CD14-positive monocyte (primary cell): ENCODE measurements at regions of chr2 and their contacts with region 1.

Region 1: GRCh38 chr2:219498280-219499057 is at the start of gene GMPPA:
- DNase-seq: peak; percentile 93 to 95 (median 94)
- H3K4me3 ChIP-seq: peak within 1 kb of the TSS; percentile 58 to 93 (median 80)
- H3K4me3 Mint-ChIP-seq: peak within 1 kb of the TSS; percentile 98 to 100
- H3K27ac ChIP-seq: peak within 1 kb of the TSS; percentile 89 to 90
- H3K27ac Mint-ChIP-seq: peak within 1 kb of the TSS; percentile 94 to 99 (median 97)
- H3K4me1 ChIP-seq: peaks cover 28 to 43% of the 10 kb centered on the region in 2 donors
- H3K4me1 Mint-ChIP-seq: peaks cover 38% of the 10 kb centered on the region
- H3K27me3 ChIP-seq: peaks cover 31 to 42% of the 10 kb centered on the region in 2 donors
- H3K27me3 Mint-ChIP-seq: peaks cover 42 to 46% (median 43%) of the 10 kb centered on the region in 3 donors
- CTCF ChIP-seq: no peak
- polyA plus RNA-seq, gene GMPPA: 35.5 to 71.2 (median 35.9) TPM

Region 2: DNA sequence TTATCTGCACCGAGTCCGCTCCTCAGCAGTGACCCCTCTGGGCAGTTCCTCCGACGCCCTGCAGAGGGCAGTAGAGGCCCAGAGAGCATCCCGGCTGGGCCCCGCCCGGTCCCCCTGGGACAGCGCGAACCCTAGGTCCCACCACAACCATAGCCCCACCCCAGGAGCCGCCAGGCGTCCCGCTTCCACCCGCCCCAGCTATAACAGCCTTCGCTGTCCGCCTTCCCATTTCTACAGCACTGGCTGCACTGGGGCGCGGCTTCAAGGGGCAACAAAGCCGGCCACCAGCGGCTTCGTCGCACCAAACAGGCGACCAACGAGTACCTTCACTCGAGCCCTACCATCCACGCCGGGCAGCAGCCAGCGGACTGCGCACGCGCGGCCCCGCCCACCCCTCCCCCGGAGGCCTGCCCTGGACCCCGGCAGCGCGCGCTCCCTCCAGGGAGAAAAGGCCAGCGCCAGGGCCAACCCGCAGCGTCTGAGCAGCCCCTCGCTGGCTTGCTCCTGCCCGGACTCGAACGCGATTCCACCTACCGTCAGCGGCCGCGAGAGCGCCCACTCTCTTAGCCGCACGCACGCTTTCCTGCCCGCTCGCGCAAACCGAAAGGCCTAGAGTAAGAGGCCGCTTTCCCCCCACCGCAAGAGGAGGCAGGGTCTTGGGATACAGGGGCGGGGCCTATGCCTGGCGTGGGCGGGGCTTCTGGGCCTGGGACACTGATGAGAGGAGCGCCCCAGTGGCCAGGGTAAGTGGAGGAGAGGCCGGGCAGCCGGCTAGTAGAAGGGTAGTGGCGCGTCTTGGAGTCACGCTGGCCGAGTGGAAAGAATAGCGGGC is 338.1 kb before region 1 on chr2 and contains the start of gene NHEJ1:
- intact Hi-C with region 1: loop called in 1 of 2 experiments (anchors 10 kb)
- DNase-seq: peak; percentile 85 to 92 (median 89)
- H3K4me3 ChIP-seq: peak within 1 kb of the TSS; percentile 60 to 87 (median 80)
- H3K4me3 Mint-ChIP-seq: peak within 1 kb of the TSS; percentile 93
- H3K27ac ChIP-seq: peak within 1 kb of the TSS; percentile 71 to 81
- H3K27ac Mint-ChIP-seq: peak within 1 kb of the TSS; percentile 87 to 97 (median 95)
- H3K4me1 ChIP-seq: peaks cover 15 to 18% of the 10 kb centered on the region in 2 donors
- H3K4me1 Mint-ChIP-seq: peaks cover 17% of the 10 kb centered on the region
- H3K27me3 ChIP-seq: no peaks in the 10 kb centered on the region
- H3K27me3 Mint-ChIP-seq: peaks cover 0 to 5% (median 2%) of the 10 kb centered on the region in 3 donors
- CTCF ChIP-seq: peak; percentile 99
- polyA plus RNA-seq, gene NHEJ1: 12.6 to 20.9 (median 20.3) TPM

Region 3: GRCh38 chr2:219543601-219544358 is 45.3 kb after region 1 on chr2 and contains the starts of genes CHPF and TMEM198:
- intact Hi-C with region 1: loop called in 1 of 2 experiments (anchors 5 kb)
- DNase-seq: peak; percentile 87 to 94 (median 90)
- H3K4me3 ChIP-seq: peak within 1 kb of the TSS; percentile 32 to 76 (median 56)
- H3K4me3 Mint-ChIP-seq: peak within 1 kb of the TSS; percentile 78 to 87
- H3K27ac ChIP-seq: no peak within 1 kb of the TSS
- H3K27ac Mint-ChIP-seq: peak within 1 kb of the TSS in 3 of 7 donors; percentile 36 to 73 (median 53)
- H3K4me1 ChIP-seq: peaks cover 21 to 27% of the 10 kb centered on the region in 2 donors
- H3K4me1 Mint-ChIP-seq: peaks cover 9% of the 10 kb centered on the region
- H3K27me3 ChIP-seq: peaks cover 24 to 51% of the 10 kb centered on the region in 2 donors
- H3K27me3 Mint-ChIP-seq: peaks cover 38 to 63% (median 40%) of the 10 kb centered on the region in 3 donors
- CTCF ChIP-seq: no peak
- polyA plus RNA-seq, gene CHPF: 0.09 to 0.32 (median 0.09) TPM
- polyA plus RNA-seq, gene TMEM198: not detected

Region 4: GRCh38 chr2:219597552-219598307 is 99.3 kb after region 1 on chr2 and contains the start of gene STK11IP:
- intact Hi-C with region 1: loop called (anchors 5 kb)
- DNase-seq: peak; percentile 96 to 97 (median 97)
- H3K4me3 ChIP-seq: peak within 1 kb of the TSS; percentile 65 to 81 (median 80)
- H3K4me3 Mint-ChIP-seq: peak within 1 kb of the TSS; percentile 95 to 96
- H3K27ac ChIP-seq: peak within 1 kb of the TSS; percentile 69 to 91
- H3K27ac Mint-ChIP-seq: peak within 1 kb of the TSS; percentile 94 to 99 (median 97)
- H3K4me1 ChIP-seq: peaks cover 11 to 16% of the 10 kb centered on the region in 2 donors
- H3K4me1 Mint-ChIP-seq: peaks cover 22% of the 10 kb centered on the region
- H3K27me3 ChIP-seq: no peaks in the 10 kb centered on the region
- H3K27me3 Mint-ChIP-seq: peaks cover 3 to 7% (median 4%) of the 10 kb centered on the region in 3 donors
- CTCF ChIP-seq: no peak
- polyA plus RNA-seq, gene STK11IP: 13.0 to 79.1 (median 15.7) TPM

Region 5: DNA sequence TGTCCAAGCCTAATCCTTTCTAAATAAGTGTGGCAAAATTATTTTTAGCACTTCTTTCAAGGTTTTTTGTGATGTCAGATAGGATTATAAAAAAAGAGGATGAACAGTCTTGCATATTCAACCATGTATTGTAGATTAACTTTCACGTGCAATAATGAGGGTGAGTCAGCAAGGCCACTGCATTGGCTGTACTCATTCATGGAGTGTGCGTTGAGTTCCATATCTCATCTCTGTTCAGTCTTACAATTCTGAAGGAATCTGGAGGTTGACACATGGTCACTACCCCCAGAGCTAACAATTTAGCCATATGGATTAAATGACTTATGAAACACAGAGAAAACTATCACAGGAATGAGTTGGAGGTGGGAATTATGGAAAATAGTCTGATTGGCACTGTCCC is 939.5 kb after region 1 on chr2:
- intact Hi-C with region 1: no loop called
- DNase-seq: no peak
- H3K4me3 ChIP-seq: no peak overlapping the region
- H3K4me3 Mint-ChIP-seq: no peak overlapping the region
- H3K27ac ChIP-seq: no peak overlapping the region
- H3K27ac Mint-ChIP-seq: no peak overlapping the region
- H3K4me1 ChIP-seq: no peaks in the 10 kb centered on the region
- H3K4me1 Mint-ChIP-seq: no peaks in the 10 kb centered on the region
- H3K27me3 ChIP-seq: no peaks in the 10 kb centered on the region
- H3K27me3 Mint-ChIP-seq: no peaks in the 10 kb centered on the region
- CTCF ChIP-seq: no peak

Region 6: GRCh38 chr2:220469201-220469600 is 970.7 kb after region 1 on chr2:
- intact Hi-C with region 1: no loop called
- DNase-seq: no peak
- H3K4me3 ChIP-seq: no peak overlapping the region
- H3K4me3 Mint-ChIP-seq: no peak overlapping the region
- H3K27ac ChIP-seq: no peak overlapping the region
- H3K27ac Mint-ChIP-seq: no peak overlapping the region
- H3K4me1 ChIP-seq: no peaks in the 10 kb centered on the region
- H3K4me1 Mint-ChIP-seq: no peaks in the 10 kb centered on the region
- H3K27me3 ChIP-seq: no peaks in the 10 kb centered on the region
- H3K27me3 Mint-ChIP-seq: no peaks in the 10 kb centered on the region
- CTCF ChIP-seq: no peak